Posterior vena cava (tissue), 2 donors: ENCODE measurements at regions of chr5 and their contacts with region 1.

Region 1: DNA sequence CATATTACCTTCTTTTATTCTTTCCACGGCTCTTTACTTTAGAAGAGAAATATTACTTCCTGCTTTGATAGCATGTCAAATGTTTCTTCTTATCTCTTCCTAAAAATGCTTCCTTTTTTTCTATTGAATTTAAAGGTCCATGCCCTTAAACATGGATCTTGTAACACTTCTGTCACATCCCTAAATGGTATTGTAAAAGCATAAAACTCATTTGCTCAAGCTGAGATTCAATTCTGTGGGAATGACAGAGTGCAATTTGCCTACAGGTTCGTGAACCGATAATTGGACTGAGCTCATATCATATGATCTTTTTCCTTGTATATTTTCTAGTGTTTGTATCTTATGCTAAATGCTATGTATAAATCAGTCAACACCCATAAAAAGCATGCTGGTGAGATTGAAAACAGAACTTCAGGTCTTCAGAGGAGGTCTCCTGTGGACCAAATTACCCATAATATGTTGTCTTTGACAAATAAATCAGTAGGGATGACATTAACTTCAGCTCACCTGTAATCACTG is 429.3 kb downstream of the TMEM232 start:
- DNase-seq: no peak

Region 2: DNA sequence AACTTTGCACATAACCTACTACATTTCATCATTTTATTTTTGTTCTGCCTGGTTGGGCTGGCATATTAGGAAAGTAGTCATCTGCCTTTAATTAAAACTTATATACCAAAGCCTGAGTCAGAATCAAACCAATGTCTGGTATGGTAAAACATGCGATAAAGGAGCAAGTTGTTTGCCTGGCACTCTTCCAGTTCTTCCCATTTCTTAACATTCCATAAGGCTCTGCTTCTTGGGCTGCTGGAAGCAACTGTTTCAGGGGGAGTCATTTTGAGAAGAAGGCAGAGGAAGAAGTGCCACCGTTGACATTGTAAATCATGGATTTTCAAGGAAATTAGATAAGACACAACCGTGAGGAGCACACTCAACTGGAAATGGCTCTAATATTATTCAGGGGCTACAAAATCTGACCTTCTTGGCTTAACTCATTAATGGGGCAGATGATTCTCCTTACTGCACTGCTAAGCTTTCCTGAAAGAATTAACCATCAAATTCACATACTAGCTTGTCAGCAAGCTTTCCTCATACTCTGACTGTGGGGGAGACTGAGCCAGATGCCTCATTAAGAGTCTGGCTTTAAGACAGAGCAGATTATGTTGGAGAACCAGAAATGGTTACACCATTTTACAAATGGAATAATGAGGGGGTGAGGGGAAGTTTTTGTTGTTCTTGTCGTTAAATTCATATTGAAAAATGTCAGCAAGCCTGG is 38.3 kb after region 1 on chr5:
- intact Hi-C with region 1: loop called in 1 of 2 experiments (anchors 2 kb)
- DNase-seq: no peak